ENCODE measurements at regions of chr1 and their contacts with region 1.

Region 1: DNA sequence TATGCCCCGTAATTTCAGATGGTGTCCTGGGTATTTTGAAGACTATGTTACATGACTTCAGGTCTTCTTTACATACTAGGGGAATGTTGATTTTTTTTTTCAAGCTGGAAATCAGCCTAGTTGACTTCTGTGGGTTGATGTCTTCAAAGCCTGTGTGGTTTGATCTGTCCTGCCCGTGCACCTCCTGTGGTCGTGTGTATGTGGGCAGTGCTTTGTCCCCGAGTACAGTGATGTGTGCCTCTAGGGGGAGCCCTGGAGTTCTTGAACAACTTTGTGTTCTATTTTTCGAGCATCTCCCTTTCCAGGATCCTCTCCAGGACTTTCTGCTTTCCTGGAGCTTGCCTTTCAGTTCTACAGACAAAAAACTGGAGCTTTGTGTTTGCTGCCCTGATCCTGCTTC is 28.9 kb downstream of the OBSCN start:
- DNase-seq: peak in 1 of 2 experiments; percentile 87
- H3K4me3 ChIP-seq: no peak overlapping the region
- H3K27ac ChIP-seq: no peak overlapping the region
- H3K4me1 ChIP-seq: no peaks in the 10 kb centered on the region
- H3K27me3 ChIP-seq: no peaks in the 10 kb centered on the region; a peak in 1 of 7 replicates
- CTCF ChIP-seq: peak; percentile 72 to 91 (median 89)
- EP300 ChIP-seq: no peak
- POLR2A ChIP-seq: no peak
- RAD21 ChIP-seq: peak; percentile 30 to 51

Region 2: DNA sequence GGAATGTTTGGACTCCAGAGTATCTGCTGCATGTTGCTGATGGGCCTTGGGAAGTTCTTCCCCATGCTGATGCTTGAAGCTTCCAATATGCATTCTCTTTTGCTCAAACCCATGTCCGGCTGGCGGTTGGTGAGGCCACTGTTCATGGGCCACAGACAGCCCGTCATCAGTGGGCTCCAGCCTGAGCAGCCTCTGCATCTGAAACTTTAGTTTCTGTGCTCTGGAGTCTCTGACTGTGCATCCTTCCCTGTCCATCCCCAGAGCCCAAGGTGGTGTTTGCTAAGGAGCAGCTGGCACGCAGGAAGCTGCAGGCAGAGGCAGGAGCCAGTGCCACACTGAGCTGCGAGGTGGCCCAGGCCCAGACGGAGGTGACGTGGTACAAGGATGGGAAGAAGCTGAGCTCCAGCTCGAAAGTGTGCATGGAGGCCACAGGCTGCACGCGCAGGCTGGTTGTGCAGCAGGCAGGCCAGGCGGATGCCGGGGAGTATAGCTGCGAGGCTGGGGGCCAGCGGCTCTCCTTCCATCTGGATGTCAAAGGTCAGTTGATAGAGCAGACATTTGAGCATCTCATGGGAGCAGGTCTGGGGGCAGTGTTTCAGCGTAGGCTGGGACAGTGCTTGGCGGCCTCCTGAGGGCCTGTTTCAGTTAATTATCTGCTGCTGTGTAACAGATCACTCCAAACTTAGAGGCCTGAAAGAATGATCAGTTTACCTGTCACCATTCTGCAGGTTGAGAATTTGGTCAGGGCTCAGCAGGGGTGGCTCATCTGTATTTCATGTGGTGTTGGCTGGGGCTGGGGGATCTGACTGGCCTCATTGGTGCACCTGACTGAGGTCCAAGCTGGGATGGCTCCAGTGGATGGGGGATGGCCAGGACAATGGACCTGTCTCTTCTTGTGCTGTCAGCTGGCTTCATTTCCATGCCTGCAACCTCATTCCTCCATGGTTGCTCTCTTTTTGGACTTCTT is 12.3 kb before region 1 on chr1:
- CTCF ChIA-PET with region 1: interaction called, 11 read pairs
- POLR2A ChIA-PET with region 1: no interaction called
- DNase-seq: peak in 1 of 2 experiments; percentile 30
- H3K4me3 ChIP-seq: no peak overlapping the region
- H3K27ac ChIP-seq: no peak overlapping the region
- H3K4me1 ChIP-seq: no peaks in the 10 kb centered on the region; a peak in 1 of 7 replicates
- H3K27me3 ChIP-seq: no peaks in the 10 kb centered on the region
- CTCF ChIP-seq: no peak
- EP300 ChIP-seq: no peak
- POLR2A ChIP-seq: no peak
- RAD21 ChIP-seq: no peak